ENCODE measurements at regions of chr6 and their contacts with region 1.

Region 1: DNA sequence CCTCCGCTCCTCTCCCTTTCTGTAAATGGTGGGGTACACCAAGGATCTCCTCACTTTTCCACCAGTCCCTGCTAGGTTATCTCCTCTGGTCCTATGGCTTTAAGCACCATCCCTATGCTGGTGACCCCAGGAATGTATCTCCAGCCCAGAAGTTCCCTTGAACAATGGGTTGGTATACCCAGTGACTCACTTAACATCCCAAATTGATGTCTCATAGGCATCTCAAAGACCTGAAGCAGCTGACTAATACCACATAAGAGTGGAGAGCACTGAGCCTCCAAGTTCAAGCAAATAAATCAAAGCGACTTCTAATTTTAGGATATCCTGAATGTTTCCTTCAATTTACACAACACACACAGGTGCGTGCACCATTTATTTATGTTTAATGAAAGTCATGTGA is 48.3 kb downstream of the ADGRF1 start:
- DNase-seq: peak; percentile 98
- ATAC-seq: peak; percentile 76
- H3K4me3 ChIP-seq: no peak overlapping the region
- H3K27ac ChIP-seq: peak overlapping the region; percentile 84
- H3K4me1 ChIP-seq: peaks cover 73% of the 10 kb centered on the region
- H3K27me3 ChIP-seq: no peaks in the 10 kb centered on the region
- CTCF ChIP-seq: no peak

Region 2: DNA sequence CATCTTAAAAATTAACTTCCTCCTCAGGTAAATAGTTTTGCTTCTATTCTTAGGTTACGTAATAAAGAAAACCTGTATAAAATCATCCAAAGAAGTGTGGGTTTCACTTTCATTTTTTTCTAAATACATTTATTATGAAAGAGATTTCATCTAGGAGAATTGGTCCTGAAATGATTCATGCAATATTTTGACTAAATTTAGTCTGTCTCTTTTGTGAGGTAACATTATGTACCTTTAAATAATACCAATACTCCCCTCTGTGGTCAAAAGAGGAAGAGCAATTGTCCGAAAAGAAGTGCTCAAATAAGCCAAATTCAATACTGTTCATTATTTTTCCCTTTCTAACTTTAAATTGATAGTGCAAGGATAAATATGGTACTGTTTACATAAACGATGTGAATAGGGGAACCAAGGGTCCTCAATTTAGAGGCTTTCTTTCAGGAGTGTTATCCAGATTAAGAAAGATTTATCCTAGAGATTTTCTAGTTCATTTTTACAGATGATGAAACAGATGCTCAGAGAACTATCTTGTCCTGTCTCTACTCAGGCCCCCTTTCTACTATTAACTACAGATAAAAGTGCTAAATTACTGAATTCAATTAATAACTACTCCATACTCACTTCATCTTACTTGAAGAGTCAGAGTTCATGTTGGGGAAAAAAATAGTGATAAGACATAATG is 367.5 kb before region 1 on chr6:
- CTCF ChIA-PET with region 1: no interaction called
- POLR2A ChIA-PET with region 1: no interaction called
- intact Hi-C with region 1: loop called (anchors 10 kb)
- DNase-seq: peak; percentile 73
- ATAC-seq: peak; percentile 67
- H3K4me3 ChIP-seq: no peak overlapping the region
- H3K27ac ChIP-seq: no peak overlapping the region
- H3K4me1 ChIP-seq: no peaks in the 10 kb centered on the region
- H3K27me3 ChIP-seq: no peaks in the 10 kb centered on the region
- CTCF ChIP-seq: peak; percentile 83

Region 3: GRCh38 chr6:46719099-46719498 is 274.7 kb before region 1 on chr6:
- CTCF ChIA-PET with region 1: no interaction called
- POLR2A ChIA-PET with region 1: no interaction called
- intact Hi-C with region 1: loop called (anchors 5 kb)
- DNase-seq: peak; percentile 98
- ATAC-seq: peak; percentile 81
- H3K4me3 ChIP-seq: no peak overlapping the region
- H3K27ac ChIP-seq: peak overlapping the region; percentile 95
- H3K4me1 ChIP-seq: peaks cover 76% of the 10 kb centered on the region
- H3K27me3 ChIP-seq: no peaks in the 10 kb centered on the region
- CTCF ChIP-seq: no peak

Region 4: GRCh38 chr6:46893648-46894047 is 100.2 kb before region 1 on chr6:
- CTCF ChIA-PET with region 1: no interaction called
- POLR2A ChIA-PET with region 1: no interaction called
- intact Hi-C with region 1: loop called (anchors 1 kb)
- DNase-seq: peak; percentile 48
- ATAC-seq: peak; percentile 38
- H3K4me3 ChIP-seq: no peak overlapping the region
- H3K27ac ChIP-seq: 0 out of 2 replicates have a peak overlapping the region, but pooled peaks have one; percentile 12
- H3K4me1 ChIP-seq: peaks cover 25% of the 10 kb centered on the region
- H3K27me3 ChIP-seq: no peaks in the 10 kb centered on the region
- CTCF ChIP-seq: no peak

Region 5: GRCh38 chr6:47034919-47035318 is 41.1 kb after region 1 on chr6:
- CTCF ChIA-PET with region 1: no interaction called
- POLR2A ChIA-PET with region 1: interaction called, 5 read pairs
- intact Hi-C with region 1: loop called (anchors 1 kb)
- DNase-seq: peak; percentile 99
- ATAC-seq: peak; percentile 89
- H3K4me3 ChIP-seq: peak overlapping the region; percentile 52
- H3K27ac ChIP-seq: peak overlapping the region; percentile 90
- H3K4me1 ChIP-seq: peaks cover 59% of the 10 kb centered on the region
- H3K27me3 ChIP-seq: no peaks in the 10 kb centered on the region
- CTCF ChIP-seq: no peak

Region 6: DNA sequence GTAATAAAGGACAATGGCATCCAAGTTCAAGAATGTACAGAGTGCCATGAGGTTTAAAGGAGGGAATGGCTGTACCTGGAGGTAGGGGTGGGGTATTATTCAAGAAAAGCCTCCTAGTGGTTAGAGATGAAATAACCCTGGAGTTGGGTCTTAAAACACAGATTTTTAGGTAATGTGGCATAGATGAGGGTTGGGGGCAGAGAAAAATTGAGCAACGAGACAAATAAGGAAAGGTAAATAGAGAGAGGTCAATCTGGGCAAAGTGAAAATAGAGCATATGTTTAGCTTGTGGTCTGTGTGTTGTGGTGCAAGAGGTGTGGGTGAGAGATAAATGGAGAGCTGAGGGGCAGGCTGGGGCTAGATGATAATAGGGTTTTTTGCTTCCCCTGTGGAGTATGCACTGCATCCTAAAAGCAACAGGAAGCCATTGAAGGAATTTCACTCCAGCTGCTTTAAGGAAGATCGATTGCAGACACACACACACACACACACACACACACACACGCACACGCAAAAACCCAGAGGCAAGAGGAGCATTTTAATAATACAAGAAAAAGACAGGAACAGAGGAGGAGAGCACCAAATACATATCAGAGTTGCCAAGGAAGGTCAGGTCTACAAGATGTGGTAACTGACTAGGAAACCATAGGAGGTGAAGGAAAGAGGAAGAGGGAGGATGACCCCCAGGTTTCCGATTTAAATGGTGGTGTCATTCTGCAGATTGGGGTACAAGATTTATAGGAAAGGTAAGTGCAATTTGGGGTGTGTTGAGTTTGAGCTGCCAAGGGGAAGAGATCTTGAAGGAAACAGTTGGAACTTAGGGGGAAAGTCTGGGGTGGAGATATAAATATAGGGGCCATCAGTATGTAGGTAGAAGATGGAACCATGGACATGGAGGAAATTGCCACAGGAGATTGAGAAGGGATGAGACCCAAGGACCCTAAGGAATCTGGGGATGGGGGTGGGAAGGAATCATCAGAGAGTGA is 79.6 kb after region 1 on chr6:
- CTCF ChIA-PET with region 1: no interaction called
- POLR2A ChIA-PET with region 1: no interaction called
- intact Hi-C with region 1: no loop called
- DNase-seq: peak; percentile 41
- ATAC-seq: no peak; the same call in 1 of the 2 replicates
- H3K4me3 ChIP-seq: no peak overlapping the region
- H3K27ac ChIP-seq: no peak overlapping the region
- H3K4me1 ChIP-seq: peaks cover 14% of the 10 kb centered on the region; the same call in 1 of the 2 replicates
- H3K27me3 ChIP-seq: no peaks in the 10 kb centered on the region
- CTCF ChIP-seq: peak; percentile 69

Region 7: DNA sequence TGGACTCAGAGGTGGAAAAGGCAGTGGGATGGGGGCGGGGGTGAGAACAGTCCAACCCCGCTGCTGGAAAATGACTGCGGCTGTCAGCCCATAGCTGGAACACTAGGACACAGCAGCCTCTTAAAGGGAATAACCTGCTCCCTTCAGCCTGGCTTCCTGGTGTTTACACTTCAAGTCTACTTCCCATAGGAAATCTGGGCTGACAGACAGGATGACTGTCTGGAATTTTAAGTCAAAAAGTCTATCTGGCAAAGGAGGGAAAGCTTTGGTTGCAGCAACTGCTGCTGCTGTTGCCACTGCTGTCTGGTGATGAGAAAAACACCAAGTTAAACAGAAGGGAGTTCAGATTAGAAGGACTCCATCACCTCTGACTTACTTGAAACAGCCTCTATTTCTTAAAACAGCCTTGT is 270.9 kb after region 1 on chr6:
- CTCF ChIA-PET with region 1: no interaction called
- POLR2A ChIA-PET with region 1: no interaction called
- intact Hi-C with region 1: no loop called
- DNase-seq: no peak
- ATAC-seq: no peak
- H3K4me3 ChIP-seq: no peak overlapping the region
- H3K27ac ChIP-seq: no peak overlapping the region
- H3K4me1 ChIP-seq: no peaks in the 10 kb centered on the region
- H3K27me3 ChIP-seq: no peaks in the 10 kb centered on the region
- CTCF ChIP-seq: no peak

Region 8: DNA sequence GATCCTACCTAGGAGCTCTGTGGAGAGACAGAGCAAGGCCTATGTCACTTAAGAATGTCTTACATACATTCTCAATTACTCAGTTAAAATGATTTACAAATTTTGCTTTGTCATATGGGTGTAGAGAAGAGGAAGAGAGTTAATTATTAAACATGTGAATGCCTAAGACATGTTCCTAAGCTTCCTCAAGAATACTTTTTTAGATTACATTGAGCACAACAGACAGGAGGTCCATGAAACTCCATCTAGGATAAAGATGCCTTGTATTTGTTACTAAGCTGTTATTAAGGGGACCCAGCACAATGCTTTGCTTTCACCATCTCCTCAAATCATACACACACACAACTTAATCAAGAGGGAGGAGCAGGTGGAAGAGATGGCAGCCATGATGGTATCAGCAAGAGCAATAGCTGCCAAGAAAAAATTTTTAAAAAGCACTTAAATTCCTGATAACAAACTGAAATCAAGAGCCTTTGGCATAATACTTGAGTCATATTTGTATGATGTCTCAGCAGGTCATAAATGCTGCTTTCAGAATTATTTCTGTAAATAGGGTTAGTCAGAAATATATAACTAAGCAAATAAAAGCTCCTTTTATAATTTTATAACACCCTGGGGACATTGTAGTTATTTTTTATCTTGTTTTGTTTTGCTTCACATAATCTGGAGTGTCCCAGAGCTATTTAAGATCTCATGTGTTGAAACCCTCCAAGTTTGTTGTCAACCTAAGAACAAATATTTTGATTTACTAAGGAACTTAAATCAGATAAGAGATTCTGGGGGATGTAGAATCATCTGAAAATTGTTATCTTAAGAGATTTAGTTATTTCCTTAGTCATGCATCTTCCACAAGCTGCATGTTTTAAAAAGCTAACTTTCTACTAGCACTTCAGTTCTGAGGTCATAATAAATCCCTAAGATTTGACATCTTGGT is 413.8 kb after region 1 on chr6:
- CTCF ChIA-PET with region 1: no interaction called
- POLR2A ChIA-PET with region 1: no interaction called
- intact Hi-C with region 1: loop called (anchors 5 kb)
- DNase-seq: peak; percentile 95
- ATAC-seq: peak; percentile 63
- H3K4me3 ChIP-seq: no peak overlapping the region
- H3K27ac ChIP-seq: peak overlapping the region; percentile 95
- H3K4me1 ChIP-seq: peaks cover 51% of the 10 kb centered on the region
- H3K27me3 ChIP-seq: no peaks in the 10 kb centered on the region
- CTCF ChIP-seq: no peak

Measured in PC-3 (cell line).